ENCODE measurements at regions of chr2 and their contacts with region 1.

Region 1: GRCh38 chr2:96501471-96501874 is 3.7 kb downstream of the NEURL3 start:
- DNase-seq: peak in 2 of 9 donors; percentile 13 to 19
- ATAC-seq: peak; percentile 72
- H3K4me3 ChIP-seq: no peak overlapping the region
- H3K4me3 Mint-ChIP-seq: peak overlapping the region in 1 of 10 donors; percentile 76
- H3K27ac ChIP-seq: no peak overlapping the region
- H3K27ac Mint-ChIP-seq: peak overlapping the region in 2 of 9 donors; percentile 41 to 89
- H3K4me1 ChIP-seq: peaks cover 0 to 14% of the 10 kb centered on the region in 2 donors
- H3K4me1 Mint-ChIP-seq: peaks cover 0 to 51% (median 7%) of the 10 kb centered on the region in 7 donors
- H3K27me3 ChIP-seq: no peaks in the 10 kb centered on the region
- H3K27me3 Mint-ChIP-seq: no peaks in the 10 kb centered on the region

Region 2: DNA sequence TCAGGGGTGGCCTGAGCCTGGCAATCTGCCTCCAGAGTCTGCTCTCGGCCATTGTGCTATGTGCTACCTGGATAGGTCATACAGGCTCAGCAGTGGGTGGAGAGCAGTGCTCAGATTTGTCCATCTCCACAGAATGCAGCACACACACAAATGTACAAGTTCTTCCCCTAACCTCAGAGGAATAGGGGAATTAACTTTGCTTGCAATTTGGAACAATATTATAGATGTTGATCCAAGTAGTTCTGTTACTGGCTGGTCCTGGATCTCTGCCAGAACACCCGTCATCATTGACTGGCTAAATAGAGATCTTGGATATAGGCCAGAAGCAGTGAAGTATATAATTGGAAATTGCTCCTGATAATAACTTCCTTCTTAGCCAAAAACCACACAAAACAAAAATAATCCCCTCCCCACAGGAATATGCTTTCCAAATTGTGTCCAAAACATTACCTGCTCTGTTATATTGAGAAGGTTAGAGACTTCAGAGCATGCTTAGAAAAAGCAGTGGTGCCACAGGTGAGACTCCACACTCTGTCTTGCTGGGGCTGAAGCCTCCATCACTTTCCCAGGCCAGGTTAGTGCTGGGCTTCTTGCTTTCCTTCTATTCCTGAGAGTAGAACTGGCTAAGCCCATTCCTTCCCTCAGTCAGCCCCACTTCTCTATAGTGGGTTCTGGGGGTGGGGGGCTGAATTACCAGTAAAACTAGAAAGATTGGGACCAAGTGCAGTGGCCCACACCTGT is 127.1 kb before region 1 on chr2:
- CTCF ChIA-PET with region 1: no interaction called
- POLR2A ChIA-PET with region 1: no interaction called
- intact Hi-C with region 1: no loop called
- DNase-seq: no peak
- ATAC-seq: no peak
- H3K4me3 ChIP-seq: no peak overlapping the region
- H3K4me3 Mint-ChIP-seq: no peak overlapping the region
- H3K27ac ChIP-seq: no peak overlapping the region
- H3K27ac Mint-ChIP-seq: no peak overlapping the region
- H3K4me1 ChIP-seq: no peaks in the 10 kb centered on the region
- H3K4me1 Mint-ChIP-seq: no peaks in the 10 kb centered on the region
- H3K27me3 ChIP-seq: no peaks in the 10 kb centered on the region
- H3K27me3 Mint-ChIP-seq: no peaks in the 10 kb centered on the region

Region 3: GRCh38 chr2:96470636-96471035 is 30.8 kb before region 1 on chr2:
- CTCF ChIA-PET with region 1: no interaction called
- POLR2A ChIA-PET with region 1: no interaction called
- intact Hi-C with region 1: loop called in 1 of 2 experiments (anchors 2 kb)
- DNase-seq: peak; percentile 9 to 69 (median 32)
- ATAC-seq: peak; percentile 82
- H3K4me3 ChIP-seq: no peak overlapping the region
- H3K4me3 Mint-ChIP-seq: peak overlapping the region in 6 of 10 donors; percentile 6 to 70 (median 24)
- H3K27ac ChIP-seq: no peak overlapping the region
- H3K27ac Mint-ChIP-seq: peak overlapping the region in 1 of 9 donors; percentile 60
- H3K4me1 ChIP-seq: peaks cover 0 to 4% of the 10 kb centered on the region in 2 donors
- H3K4me1 Mint-ChIP-seq: peaks cover 3 to 10% (median 5%) of the 10 kb centered on the region in 7 donors
- H3K27me3 ChIP-seq: no peaks in the 10 kb centered on the region
- H3K27me3 Mint-ChIP-seq: peaks cover 5 to 12% (median 6%) of the 10 kb centered on the region in 5 donors

Region 4: DNA sequence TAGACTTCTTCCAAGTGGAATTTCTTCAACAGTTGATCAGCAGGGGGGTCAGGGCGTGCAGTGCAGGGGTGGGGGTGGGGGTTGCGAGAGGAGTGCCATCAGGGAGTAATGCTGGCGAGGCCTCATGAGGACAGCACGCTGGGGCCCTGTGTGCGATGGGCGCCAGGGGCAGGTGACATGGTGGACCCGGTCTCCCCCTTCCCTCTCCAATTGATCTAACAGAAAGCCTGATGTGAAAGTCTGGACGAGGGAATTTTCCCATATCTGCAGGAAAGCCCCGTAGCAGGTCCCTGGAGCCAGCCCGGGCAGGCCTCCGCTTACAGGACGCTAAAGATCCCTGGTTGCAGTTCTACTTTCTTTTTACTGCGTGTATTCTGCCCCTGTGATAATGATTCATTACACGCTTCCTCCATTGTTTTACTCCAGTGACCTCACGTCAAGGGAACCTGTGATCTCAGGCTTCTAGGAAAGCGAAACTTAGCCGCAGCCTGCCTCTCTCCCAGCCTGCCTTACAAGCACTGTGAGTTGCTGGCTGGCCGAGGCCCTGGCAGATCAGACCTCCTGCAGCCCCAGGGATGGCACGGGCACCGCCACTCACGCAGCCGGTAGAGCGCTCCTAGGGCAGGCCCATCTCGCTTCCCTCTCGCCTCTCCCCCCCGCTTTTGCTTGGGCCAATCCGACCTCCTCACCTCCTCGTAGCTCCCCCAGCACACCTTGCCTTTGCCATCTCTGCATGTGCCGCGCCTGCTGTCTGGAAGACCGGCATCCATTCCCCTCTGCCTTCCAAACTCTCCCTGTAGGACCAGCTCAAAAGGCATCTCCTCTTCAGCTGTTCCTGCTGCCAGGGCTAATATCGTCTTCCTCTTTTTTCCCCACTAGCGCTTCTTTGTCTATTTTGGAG is 15.5 kb before region 1 on chr2:
- CTCF ChIA-PET with region 1: interaction called, 4 read pairs
- POLR2A ChIA-PET with region 1: interaction called, 3 read pairs
- intact Hi-C with region 1: loop called in 1 of 2 experiments (anchors 2 kb)
- DNase-seq: peak; percentile 46 to 83 (median 72)
- ATAC-seq: peak; percentile 93
- H3K4me3 ChIP-seq: peak overlapping the region; percentile 71
- H3K4me3 Mint-ChIP-seq: peak overlapping the region; percentile 87 to 97 (median 94)
- H3K27ac ChIP-seq: peak overlapping the region; percentile 84
- H3K27ac Mint-ChIP-seq: peak overlapping the region; percentile 94 to 100 (median 98)
- H3K4me1 ChIP-seq: peaks cover 6 to 14% of the 10 kb centered on the region in 2 donors
- H3K4me1 Mint-ChIP-seq: peaks cover 11 to 62% (median 29%) of the 10 kb centered on the region in 7 donors
- H3K27me3 ChIP-seq: no peaks in the 10 kb centered on the region
- H3K27me3 Mint-ChIP-seq: peaks cover 0 to 4% (median 2%) of the 10 kb centered on the region in 5 donors

Measured in naive thymus-derived CD4-positive, alpha-beta T cell (primary cell).